Esophagus squamous epithelium (tissue), 5 donors: ENCODE measurements at regions of chr15 and their contacts with region 1.

Region 1: DNA sequence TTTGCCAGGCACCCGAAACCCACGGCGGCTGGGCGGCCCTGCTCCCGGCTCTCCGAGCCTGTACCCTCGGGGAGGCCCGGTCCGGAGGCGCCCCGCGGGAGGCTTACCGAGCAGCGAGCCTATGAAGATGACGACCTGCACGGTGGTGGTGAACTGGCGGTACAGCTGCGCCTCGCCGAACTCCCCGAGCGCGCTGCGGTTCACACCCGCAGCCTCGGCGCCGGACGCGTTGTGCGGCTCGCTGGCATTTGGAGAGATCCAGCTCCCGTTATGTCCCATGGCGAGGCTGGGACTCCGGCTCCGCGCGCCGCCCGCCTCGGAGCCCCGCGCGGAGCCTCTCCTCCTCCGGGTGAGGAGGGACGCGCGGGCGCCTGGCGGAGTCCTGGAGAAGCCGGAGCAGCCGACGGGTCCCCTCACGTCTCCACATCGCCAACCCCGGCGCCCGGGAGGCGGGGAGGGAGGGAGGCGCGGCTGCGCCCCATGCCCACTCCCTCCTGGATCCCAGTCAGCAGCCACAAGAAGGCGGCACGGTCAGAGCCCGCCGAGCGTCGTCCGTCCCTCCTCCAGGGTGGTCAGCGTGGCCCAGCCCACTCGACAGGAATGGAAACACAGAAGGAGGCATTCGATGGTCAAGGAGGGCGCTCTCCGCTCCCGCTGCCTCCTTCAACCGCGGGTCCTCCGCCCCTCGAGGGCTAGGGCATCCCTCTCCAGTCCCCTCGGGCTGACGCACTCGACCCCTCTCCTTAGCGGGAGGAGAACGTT is at the start of gene GPR176:
- DNase-seq: no peak
- H3K4me3 ChIP-seq: peak within 1 kb of the TSS; percentile 52 to 78 (median 72)
- H3K27ac ChIP-seq: peak within 1 kb of the TSS; percentile 62 to 87 (median 79)
- H3K4me1 ChIP-seq: peaks cover 12 to 25% (median 13%) of the 10 kb centered on the region in 3 donors
- H3K27me3 ChIP-seq: peaks cover 0 to 45% (median 5%) of the 10 kb centered on the region in 4 donors
- CTCF ChIP-seq: no peak
- POLR2A ChIP-seq: peak in 2 of 4 donors; percentile 15 to 38
- total RNA-seq, gene GPR176: 1.1 to 5.0 (median 4.0) TPM in 3 of 4 donors, not detected in the other

Region 2: GRCh38 chr15:39976291-39977274 is 56.7 kb after region 1 on chr15:
- intact Hi-C with region 1: loop called (anchors 10 kb)
- DNase-seq: no peak
- H3K4me3 ChIP-seq: peak overlapping the region; percentile 55 to 65 (median 62)
- H3K27ac ChIP-seq: peak overlapping the region; percentile 56 to 91 (median 76)
- H3K4me1 ChIP-seq: peaks cover 0 to 26% (median 3%) of the 10 kb centered on the region in 3 donors
- H3K27me3 ChIP-seq: no peaks in the 10 kb centered on the region
- CTCF ChIP-seq: peak; percentile 20 to 57 (median 42)
- POLR2A ChIP-seq: no peak

Region 3: DNA sequence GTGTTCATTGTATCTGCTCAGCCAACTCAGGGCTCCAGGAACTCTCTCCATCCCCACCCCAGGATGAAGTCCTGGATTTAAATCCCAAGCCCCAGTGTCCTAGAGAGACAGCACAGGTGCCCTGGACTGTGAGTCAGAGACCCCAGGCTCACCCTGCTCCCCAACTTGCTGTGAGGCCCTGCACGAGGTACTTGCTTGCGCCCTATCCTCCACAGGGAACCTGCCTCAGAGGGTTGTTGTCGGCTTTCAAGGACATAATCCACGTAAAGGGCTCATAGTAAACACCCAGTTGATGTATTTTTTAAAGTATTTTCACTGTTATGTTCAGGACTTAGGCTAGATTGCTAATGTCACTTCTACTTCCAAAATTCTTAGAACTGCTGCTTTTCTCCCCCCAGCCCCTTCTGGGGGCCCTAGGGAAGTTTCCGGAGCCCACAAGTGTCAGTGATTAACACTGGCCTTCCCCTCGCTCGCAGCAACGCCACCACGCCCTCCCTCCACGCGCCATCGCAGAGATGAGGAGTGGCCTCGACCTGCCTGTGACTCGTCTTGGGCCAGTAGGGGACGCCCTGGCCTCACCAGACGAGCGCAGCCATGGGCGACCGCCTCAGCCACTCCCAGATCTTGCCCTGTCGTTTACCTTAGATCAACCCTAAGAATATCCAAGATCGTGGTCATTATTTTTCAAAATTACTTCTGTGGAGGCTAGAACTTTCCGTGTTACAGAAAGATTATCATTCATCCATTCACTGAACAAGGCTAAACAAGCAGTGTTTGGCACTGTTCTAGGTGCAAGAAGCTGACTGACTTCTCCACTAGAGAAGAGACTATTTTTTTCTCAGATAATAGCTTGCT is 125.0 kb after region 1 on chr15:
- intact Hi-C with region 1: no loop called
- DNase-seq: peak; percentile 51
- H3K4me3 ChIP-seq: peak overlapping the region in 2 of 4 donors; percentile 5 to 44
- H3K27ac ChIP-seq: peak overlapping the region; percentile 28 to 66 (median 62)
- H3K4me1 ChIP-seq: peaks cover 29 to 60% (median 43%) of the 10 kb centered on the region in 3 donors
- H3K27me3 ChIP-seq: no peaks in the 10 kb centered on the region
- CTCF ChIP-seq: peak; percentile 79 to 95 (median 91)
- POLR2A ChIP-seq: no peak